ENCODE measurements at regions of chr6 and their contacts with region 1.

Region 1: GRCh38 chr6:137165375-137166246 is 7.8 kb downstream of the IL22RA2 start:
- DNase-seq: peak in 11 of 14 experiments; percentile 5 to 77 (median 18)
- ATAC-seq: no peak
- H3K4me3 ChIP-seq: no peak overlapping the region
- H3K4me3 Mint-ChIP-seq: no peak overlapping the region
- H3K27ac ChIP-seq: peak overlapping the region in 1 of 2 donors; percentile 3
- H3K27ac Mint-ChIP-seq: no peak overlapping the region
- H3K4me1 ChIP-seq: peaks cover 21% of the 10 kb centered on the region
- H3K4me1 Mint-ChIP-seq: peaks cover 26% of the 10 kb centered on the region
- H3K27me3 ChIP-seq: no peaks in the 10 kb centered on the region
- H3K27me3 Mint-ChIP-seq: peaks cover 18% of the 10 kb centered on the region
- CTCF ChIP-seq: no peak

Region 2: DNA sequence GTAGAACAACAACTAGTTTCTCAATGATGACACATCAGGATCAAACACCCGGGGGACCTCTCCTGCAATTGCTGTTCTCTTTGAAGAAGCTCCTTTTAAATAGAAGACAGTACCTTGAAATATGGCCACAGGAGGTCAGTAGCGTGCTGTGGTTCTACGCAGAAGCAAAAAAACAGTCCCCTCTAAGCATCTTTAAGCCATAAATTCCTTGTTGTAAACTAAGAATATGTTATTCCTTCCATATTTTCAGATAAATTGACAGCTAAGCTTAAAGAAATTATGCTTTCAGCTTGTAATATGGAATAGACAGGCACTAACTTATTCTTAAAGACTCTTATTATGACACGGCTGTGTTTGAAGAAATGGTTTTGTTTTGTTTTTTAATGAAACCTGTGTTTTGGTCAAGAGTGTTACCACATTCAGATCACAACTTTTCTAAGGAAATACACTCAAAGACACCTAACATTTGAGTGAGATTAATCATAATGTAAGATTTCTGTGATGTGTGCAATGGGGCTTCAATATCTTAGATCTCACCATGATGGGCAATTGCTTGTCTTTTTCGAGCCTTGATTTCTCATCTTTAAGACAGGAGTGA is 71.1 kb before region 1 on chr6:
- CTCF ChIA-PET with region 1: interaction called, 5 read pairs
- POLR2A ChIA-PET with region 1: no interaction called
- intact Hi-C with region 1: loop called in 1 of 2 experiments (anchors 5 kb)
- DNase-seq: peak; percentile 22 to 80 (median 37)
- ATAC-seq: no peak
- H3K4me3 ChIP-seq: no peak overlapping the region
- H3K4me3 Mint-ChIP-seq: no peak overlapping the region
- H3K27ac ChIP-seq: no peak overlapping the region
- H3K27ac Mint-ChIP-seq: no peak overlapping the region
- H3K4me1 ChIP-seq: peaks cover 9% of the 10 kb centered on the region
- H3K4me1 Mint-ChIP-seq: peaks cover 12% of the 10 kb centered on the region
- H3K27me3 ChIP-seq: no peaks in the 10 kb centered on the region
- H3K27me3 Mint-ChIP-seq: peaks cover 5% of the 10 kb centered on the region
- CTCF ChIP-seq: peak; percentile 71

Region 3: DNA sequence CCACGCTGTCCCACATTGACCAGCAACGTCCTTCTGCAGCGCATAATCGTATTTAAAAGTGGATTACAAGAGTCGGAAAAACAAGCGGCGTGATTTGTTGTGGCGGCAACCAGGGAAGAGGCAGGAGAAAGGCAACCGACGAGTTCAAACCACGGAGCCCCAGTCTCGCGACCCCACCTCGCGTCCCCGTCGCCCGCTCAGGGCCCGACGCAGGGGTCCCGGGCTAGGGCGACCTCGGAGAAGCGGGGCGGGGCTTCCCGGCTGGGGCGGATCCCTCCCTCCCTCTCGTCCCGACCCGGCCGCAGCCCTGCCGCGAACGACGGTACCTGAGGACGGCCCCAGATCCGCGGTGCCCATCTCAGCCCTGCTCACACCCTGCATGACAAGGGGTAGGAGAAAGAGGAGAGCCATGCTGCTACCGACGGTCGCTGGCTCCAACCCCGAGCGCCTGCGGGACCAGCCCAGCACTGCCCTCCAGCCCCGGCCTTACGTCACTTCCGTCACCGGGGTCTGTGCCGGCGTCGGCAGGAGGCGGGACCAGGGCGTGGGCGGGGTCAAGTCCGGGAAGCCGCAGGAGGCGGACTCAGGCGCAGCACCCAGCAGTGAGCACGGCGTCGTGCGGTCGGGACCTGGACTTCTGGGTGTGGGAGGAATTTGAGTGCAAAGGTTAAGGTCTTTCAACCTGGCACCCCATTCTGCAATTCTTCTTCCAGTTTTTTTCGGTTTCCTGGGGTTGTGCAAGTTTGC is 53.5 kb after region 1 on chr6 and contains the start of gene IFNGR1:
- CTCF ChIA-PET with region 1: no interaction called
- POLR2A ChIA-PET with region 1: no interaction called
- intact Hi-C with region 1: no loop called
- DNase-seq: peak; percentile 90 to 99 (median 95)
- ATAC-seq: peak; percentile 82
- H3K4me3 ChIP-seq: peak within 1 kb of the TSS; percentile 65
- H3K4me3 Mint-ChIP-seq: peak within 1 kb of the TSS; percentile 95
- H3K27ac ChIP-seq: peak within 1 kb of the TSS; percentile 90 to 91
- H3K27ac Mint-ChIP-seq: peak within 1 kb of the TSS; percentile 93
- H3K4me1 ChIP-seq: peaks cover 45% of the 10 kb centered on the region
- H3K4me1 Mint-ChIP-seq: peaks cover 61% of the 10 kb centered on the region
- H3K27me3 ChIP-seq: no peaks in the 10 kb centered on the region
- H3K27me3 Mint-ChIP-seq: no peaks in the 10 kb centered on the region
- CTCF ChIP-seq: no peak
- total RNA-seq, gene IFNGR1: 81.7 to 84.3 TPM

Measured in CD4-positive, alpha-beta T cell (primary cell).